ENCODE measurements at regions of chr2 and their contacts with region 1.

Region 1: DNA sequence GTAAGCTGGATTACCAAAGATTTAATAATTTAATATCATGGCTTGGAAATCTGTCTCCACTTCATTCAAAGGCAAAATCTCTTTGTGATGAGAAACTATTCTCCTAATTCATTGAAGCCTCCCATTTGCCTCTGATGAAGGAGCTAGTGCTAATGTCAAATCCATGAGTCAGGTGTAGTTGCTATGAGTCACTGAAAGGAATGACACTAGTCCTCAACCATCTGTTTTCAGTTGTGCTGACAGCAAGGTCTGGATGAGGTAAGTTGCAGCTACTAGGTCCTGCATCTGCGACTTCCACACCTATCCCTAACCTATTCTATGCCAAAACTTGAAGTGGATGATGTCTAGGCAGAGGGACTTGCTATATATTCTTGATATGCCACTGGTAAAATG is 324.0 kb upstream of the UBE2E3 start:
- DNase-seq: peak; percentile 42 to 93
- H3K4me3 ChIP-seq: no peak overlapping the region
- H3K27ac ChIP-seq: peak overlapping the region; percentile 33
- H3K4me1 ChIP-seq: peaks cover 21% of the 10 kb centered on the region
- H3K27me3 ChIP-seq: no peaks in the 10 kb centered on the region
- CTCF ChIP-seq: no peak

Region 2: DNA sequence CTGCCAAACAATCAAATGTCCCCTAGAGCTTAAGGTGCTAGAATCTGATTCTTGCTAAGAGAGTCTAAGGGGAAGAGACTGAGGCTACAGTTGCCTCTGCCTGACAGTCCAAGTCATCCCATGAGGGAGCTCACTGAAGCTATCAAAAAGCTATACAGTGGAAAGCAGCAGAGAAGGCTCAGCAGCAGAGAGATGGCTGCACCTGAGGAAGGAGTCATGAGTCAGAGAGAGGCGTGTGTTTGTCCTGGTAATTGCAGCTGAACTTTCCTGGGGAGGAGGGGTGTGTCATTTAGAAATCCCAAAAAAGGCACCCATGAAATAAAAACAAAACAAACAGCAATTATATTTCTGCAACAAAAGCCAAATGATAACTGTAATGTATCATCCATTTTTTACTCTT is 18.7 kb after region 1 on chr2:
- CTCF ChIA-PET with region 1: no interaction called
- POLR2A ChIA-PET with region 1: no interaction called
- intact Hi-C with region 1: loop called (anchors 1 kb)
- DNase-seq: no peak
- H3K4me3 ChIP-seq: no peak overlapping the region
- H3K27ac ChIP-seq: no peak overlapping the region
- H3K4me1 ChIP-seq: peaks cover 37% of the 10 kb centered on the region
- H3K27me3 ChIP-seq: no peaks in the 10 kb centered on the region
- CTCF ChIP-seq: no peak

Region 3: DNA sequence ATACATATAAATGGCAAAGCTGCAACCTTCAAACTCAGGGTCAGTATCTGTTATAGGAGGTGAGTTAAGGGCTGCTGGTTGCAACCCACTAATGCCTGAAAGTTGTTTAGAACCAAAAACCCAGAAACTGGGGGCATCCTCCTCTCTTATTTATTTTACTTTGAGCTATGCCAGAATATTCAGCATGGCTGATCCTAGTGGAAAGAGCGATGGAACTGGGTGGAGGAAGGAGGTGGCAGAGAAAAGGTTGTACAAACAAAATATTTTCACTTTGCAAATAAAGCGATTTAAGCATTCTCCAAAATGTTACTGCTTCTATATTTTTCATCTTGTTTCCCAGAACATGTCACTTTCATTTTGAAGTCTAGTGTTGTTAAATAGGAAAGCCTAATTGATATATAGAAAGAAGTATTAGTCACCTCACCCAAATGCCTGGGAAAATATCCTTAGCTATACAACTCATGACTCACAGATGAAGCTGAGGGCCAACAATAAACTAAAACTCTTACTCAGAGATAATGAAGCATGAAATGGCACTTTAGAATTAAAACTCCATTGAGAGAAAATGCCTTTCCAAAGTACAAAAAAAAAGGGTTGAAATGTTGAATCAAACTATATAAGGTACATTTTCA is 72.6 kb after region 1 on chr2:
- CTCF ChIA-PET with region 1: interaction called, 3 read pairs
- POLR2A ChIA-PET with region 1: no interaction called
- intact Hi-C with region 1: loop called (anchors 2 kb)
- DNase-seq: peak in 1 of 2 experiments; percentile 94
- H3K4me3 ChIP-seq: no peak overlapping the region
- H3K27ac ChIP-seq: peak overlapping the region; percentile 77
- H3K4me1 ChIP-seq: peaks cover 29% of the 10 kb centered on the region
- H3K27me3 ChIP-seq: no peaks in the 10 kb centered on the region
- CTCF ChIP-seq: no peak

Region 4: DNA sequence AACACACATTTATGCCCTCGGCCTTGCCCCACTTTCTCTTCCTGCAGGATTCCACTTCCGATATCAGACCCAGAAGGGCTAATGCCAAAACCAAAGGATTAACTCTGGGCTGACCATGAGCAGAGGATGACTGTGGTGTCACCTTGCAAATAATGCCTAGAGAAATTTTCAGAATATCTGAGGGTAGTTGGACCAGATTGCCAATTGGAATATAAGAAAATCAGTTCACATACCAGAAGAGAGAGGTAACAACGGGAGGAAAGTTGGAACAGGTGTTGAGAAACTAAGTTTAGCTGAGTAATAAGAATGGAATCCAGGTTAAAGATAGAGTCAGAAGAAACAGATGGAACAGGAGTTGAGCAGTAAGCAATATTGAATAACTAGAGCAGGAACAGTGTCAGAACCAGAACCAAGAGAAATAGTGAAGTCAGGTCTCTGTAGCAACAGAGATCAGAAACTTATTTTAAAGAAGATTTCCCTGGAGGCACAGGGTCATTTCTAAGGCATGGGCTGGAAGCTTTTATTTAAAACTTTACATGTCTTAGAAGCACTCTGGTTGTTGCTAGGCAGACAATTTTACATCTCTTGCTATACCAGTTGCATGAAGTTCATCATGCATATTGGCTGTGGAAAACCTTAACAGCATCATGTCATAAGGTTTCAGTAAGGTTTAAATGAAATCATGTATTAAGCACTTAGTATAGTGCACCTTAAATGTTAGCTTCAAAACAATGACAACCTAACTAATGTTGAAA is 91.5 kb after region 1 on chr2:
- CTCF ChIA-PET with region 1: interaction called, 3 read pairs
- POLR2A ChIA-PET with region 1: no interaction called
- intact Hi-C with region 1: loop called (anchors 5 kb)
- DNase-seq: peak; percentile 67 to 95
- H3K4me3 ChIP-seq: peak overlapping the region; percentile 6; the same call in 1 of the 2 replicates
- H3K27ac ChIP-seq: peak overlapping the region; percentile 49
- H3K4me1 ChIP-seq: peaks cover 26% of the 10 kb centered on the region
- H3K27me3 ChIP-seq: no peaks in the 10 kb centered on the region
- CTCF ChIP-seq: no peak

Measured in PC-9 (cell line).